Thyroid gland (tissue), 4 donors: ENCODE measurements at regions of chr12 and their contacts with region 1.

Region 1: GRCh38 chr12:119444456-119445044 is 110.0 kb downstream of the CCDC60 start:
- DNase-seq: peak; percentile 58 to 65
- H3K4me3 ChIP-seq: no peak overlapping the region
- H3K27ac ChIP-seq: no peak overlapping the region
- H3K4me1 ChIP-seq: no peaks in the 10 kb centered on the region
- H3K27me3 ChIP-seq: no peaks in the 10 kb centered on the region
- CTCF ChIP-seq: peak; percentile 79 to 95 (median 88)
- POLR2A ChIP-seq: no peak

Region 2: GRCh38 chr12:119544765-119545625 is 100.4 kb after region 1 on chr12:
- intact Hi-C with region 1: loop called (anchors 5 kb)
- DNase-seq: peak; percentile 64 to 69
- H3K4me3 ChIP-seq: no peak overlapping the region
- H3K27ac ChIP-seq: no peak overlapping the region
- H3K4me1 ChIP-seq: no peaks in the 10 kb centered on the region
- H3K27me3 ChIP-seq: no peaks in the 10 kb centered on the region
- CTCF ChIP-seq: peak; percentile 73 to 90 (median 86)
- POLR2A ChIP-seq: no peak

Region 3: DNA sequence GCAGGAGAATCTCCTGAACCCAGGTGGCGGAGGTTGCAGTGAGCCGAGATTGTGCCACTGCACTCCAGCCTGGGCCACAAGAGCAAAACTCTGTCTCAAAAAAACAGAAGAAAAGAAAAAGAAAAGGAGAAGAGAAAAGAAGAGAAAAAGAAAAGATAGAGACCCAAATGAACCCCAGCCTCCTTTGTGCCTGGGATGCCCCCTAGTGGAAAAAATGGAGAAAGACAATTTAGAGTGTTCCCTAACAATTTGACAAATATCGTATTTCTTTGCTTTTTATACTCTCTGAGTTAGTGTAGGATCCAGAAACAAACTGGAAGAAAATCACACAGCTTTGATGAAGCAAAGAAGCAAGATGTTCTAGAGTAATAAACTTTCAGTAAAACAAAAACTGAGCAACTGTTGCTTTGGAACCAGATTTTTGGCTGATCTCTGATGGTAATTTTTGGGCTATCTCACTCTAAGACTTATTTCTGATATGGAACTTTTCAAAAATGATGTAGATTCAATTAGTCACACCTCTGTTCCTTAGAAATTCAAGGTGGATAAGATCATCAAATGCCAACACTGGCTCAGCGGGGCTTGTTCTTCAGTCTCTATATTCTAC is 204.8 kb after region 1 on chr12:
- intact Hi-C with region 1: loop called (anchors 10 kb)
- DNase-seq: no peak
- H3K4me3 ChIP-seq: no peak overlapping the region
- H3K27ac ChIP-seq: no peak overlapping the region
- H3K4me1 ChIP-seq: no peaks in the 10 kb centered on the region
- H3K27me3 ChIP-seq: no peaks in the 10 kb centered on the region
- CTCF ChIP-seq: peak; percentile 61 to 78 (median 72)
- POLR2A ChIP-seq: no peak